AG04449 (cell line): ENCODE measurements at regions of chr21 and their contacts with region 1.

Region 1: DNA sequence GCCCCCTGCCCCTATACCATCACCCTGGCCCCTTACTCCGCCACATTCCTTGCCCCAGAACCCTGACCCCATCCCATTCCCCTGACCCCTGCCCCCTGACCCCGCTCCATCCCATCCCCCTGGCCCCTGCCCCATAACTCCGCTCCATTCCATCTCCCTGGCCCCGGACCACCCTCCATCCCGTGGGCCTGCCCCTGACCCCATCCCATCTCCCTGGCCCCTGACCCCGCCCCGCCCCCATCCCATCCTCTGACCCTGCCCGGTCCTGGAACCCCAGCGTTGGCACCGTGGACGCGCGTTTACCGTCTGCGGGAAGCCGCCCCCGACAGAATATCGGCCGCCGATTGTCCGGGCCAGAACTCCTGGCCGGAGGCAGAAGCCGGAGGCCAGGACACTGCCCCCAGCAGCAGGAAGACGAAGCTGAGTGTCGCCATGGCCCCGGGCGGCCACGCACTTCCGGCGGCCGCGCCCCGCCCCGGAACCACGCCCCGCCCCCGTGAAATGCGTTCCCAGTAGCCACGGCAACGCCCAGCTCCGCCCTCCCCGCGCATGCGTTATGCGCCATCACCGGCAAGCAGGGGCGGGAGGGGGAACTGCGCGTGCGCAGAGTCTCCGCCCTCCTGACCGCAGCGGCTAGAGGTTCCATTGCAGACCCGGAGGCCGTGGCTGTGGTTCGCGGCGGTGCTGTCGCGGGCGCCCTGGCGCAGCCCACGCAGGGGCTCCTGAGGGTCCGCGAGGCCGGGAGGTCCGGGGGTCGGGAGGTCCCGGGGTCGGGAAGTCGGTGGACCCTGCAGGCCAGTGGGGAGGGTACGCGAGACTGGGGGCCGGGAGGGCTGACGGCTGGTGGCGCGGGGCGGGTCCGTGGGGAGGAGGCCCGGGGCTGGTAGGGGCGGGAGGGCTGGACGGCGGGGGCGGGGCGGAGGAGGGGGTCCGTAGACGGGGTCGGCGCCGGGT is at the start of gene POFUT2:
- DNase-seq: no peak
- H3K4me3 ChIP-seq: peak within 1 kb of the TSS; percentile 80
- CTCF ChIP-seq: no peak

Region 2: DNA sequence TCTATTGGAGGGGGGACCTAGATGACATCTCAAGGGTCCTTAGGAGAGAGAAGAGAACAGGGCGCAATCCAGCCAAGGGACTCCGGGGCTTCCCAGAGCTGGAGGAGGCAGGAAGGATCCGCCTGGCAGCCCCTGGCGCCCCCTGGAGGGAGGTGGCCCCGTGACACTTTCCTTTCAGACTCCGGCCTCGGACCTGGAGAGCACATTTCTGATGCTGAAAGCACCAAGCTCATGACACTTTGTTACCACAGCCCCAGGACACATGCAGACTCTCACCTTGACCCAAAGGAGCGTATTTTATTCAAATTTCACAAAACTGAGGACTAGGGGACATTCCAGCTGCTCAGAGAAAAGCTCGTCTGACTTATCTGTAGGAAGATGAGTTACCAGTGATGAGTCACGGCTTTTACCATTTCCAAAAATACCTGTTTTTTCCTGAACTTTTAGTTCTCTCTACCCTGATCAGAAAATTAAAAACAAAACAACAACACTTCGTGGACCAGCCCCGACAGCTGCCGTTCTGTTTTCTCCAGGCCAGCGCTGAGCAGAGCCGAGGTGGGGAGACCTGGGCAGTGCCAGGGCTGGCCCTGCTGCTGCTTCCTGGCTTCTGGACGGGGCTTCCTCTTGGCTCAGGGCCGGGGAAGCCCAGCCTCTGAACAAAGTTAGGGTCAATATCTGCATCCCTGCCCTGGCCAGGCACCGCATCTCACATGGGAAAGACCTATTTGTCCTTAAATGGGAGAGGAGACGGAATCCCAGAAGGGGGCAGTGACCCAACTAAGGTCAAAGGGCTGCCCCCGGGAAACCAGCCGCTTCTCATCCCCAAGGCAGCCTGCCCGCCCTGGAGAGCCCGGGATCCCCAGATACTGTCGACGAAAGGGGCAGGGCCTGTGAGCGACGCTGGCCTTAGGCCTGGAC is 21.6 kb after region 1 on chr21:
- CTCF ChIA-PET with region 1: interaction called, 42 read pairs
- POLR2A ChIA-PET with region 1: no interaction called
- DNase-seq: no peak
- H3K4me3 ChIP-seq: no peak overlapping the region
- CTCF ChIP-seq: peak; percentile 89

Region 3: GRCh38 chr21:45432575-45433255 is 145.0 kb after region 1 on chr21:
- CTCF ChIA-PET with region 1: interaction called, 66 read pairs
- POLR2A ChIA-PET with region 1: no interaction called
- DNase-seq: no peak
- H3K4me3 ChIP-seq: no peak overlapping the region
- CTCF ChIP-seq: no peak

Region 4: GRCh38 chr21:45439161-45439872 is 151.6 kb after region 1 on chr21:
- CTCF ChIA-PET with region 1: interaction called, 161 read pairs
- POLR2A ChIA-PET with region 1: interaction called, 5 read pairs
- DNase-seq: peak; percentile 31
- H3K4me3 ChIP-seq: peak overlapping the region; percentile 21; the same call in 1 of the 2 replicates
- CTCF ChIP-seq: peak; percentile 94